ENCODE measurements at regions of chr3 and their contacts with region 1.

Region 1: GRCh38 chr3:42502429-42503250 is at the start of gene VIPR1:
- DNase-seq: peak; percentile 47
- H3K4me3 ChIP-seq: peak within 1 kb of the TSS; percentile 32 to 38 (median 35)
- H3K27ac ChIP-seq: no peak within 1 kb of the TSS
- H3K4me1 ChIP-seq: peaks cover 6% of the 10 kb centered on the region
- H3K27me3 ChIP-seq: peaks cover 6 to 10% of the 10 kb centered on the region in 2 experiments
- CTCF ChIP-seq: no peak
- POLR2A ChIP-seq: no peak
- total RNA-seq, gene VIPR1: 0.67 and 3.8 TPM in 2 replicates

Region 2: DNA sequence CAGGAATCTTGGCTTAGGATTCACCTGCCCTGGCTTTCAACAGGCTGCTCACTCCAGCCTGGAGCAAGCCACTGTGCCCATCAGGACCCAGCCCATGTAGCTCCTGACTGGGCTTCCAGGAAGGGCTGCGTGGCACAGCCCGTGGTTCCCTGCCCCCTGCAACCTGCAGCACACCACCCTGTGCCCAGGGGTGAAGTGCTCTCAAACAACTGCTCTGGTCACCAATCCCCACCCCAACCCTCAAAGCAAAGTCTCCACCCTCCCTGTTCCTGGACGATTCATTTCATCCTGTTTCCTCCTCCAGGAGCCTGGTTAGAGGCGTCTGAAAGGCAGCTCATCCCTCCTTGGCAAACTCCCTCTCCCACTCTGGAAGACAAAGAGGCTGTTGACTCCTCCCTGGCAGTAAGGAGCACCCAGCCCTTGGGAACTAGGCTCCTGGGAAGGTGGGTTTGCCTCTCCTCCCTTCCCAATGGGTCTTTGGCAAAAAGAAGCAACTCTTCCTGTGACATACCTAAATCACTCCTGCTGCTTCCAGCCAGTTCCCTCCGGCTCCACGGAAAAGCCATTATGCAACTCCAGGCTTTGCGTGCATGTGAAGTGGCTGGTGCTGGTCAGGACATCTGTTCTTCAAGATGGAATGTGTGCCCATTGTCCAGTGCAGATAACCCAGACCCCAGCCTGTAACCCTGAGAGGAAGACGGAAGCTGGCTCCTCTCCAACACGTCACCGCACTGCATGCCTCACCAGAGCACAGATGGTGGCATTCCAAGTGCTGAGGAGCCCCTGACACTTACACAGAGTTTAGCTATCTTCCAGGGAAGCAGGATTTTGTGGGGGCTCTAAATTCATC is 29.3 kb before region 1 on chr3:
- CTCF ChIA-PET with region 1: interaction called, 8 read pairs
- POLR2A ChIA-PET with region 1: interaction called, 9 read pairs
- dilution Hi-C with region 1: no loop called
- intact Hi-C with region 1: loop called (anchors 1 kb)
- DNase-seq: peak; percentile 92
- H3K4me3 ChIP-seq: peak overlapping the region in 1 of 3 experiments; percentile 2
- H3K27ac ChIP-seq: peak overlapping the region; percentile 89
- H3K4me1 ChIP-seq: peaks cover 32% of the 10 kb centered on the region
- H3K27me3 ChIP-seq: no peaks in the 10 kb centered on the region
- CTCF ChIP-seq: no peak
- POLR2A ChIP-seq: no peak

Region 3: GRCh38 chr3:42539869-42540714 is 37.5 kb after region 1 on chr3:
- CTCF ChIA-PET with region 1: interaction called, 19 read pairs
- POLR2A ChIA-PET with region 1: no interaction called
- dilution Hi-C with region 1: no loop called
- intact Hi-C with region 1: loop called (anchors 1 kb)
- DNase-seq: no peak
- H3K4me3 ChIP-seq: no peak overlapping the region
- H3K27ac ChIP-seq: no peak overlapping the region
- H3K4me1 ChIP-seq: no peaks in the 10 kb centered on the region
- H3K27me3 ChIP-seq: no peaks in the 10 kb centered on the region
- CTCF ChIP-seq: peak; percentile 62 to 78
- POLR2A ChIP-seq: no peak

Region 4: DNA sequence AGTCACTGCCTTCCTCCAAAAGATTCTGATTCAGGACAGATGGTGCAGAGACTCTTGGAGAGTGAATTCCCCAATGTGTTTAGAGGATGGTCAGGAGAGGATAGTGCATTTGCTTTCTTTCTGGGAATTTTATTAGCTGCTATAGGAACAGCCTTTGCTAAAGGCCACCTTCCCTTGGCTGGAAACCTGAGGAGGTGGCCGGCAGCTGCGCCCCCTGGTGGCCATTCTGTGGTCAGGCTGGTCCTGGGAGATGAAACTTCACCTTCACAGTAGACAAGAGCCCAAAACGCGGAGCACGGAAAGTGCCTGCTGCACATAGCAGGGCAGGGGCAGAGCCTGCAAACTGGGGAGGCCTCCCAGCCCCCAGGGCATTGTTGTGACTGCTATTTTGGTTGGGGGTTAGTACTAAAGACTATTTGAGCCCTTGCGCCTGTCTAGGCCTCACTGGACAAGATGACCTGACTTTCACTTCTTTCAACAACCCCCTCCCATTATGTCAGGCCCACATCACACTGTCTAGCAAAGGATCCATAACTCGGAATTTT is 44.8 kb after region 1 on chr3:
- CTCF ChIA-PET with region 1: interaction called, 31 read pairs
- POLR2A ChIA-PET with region 1: no interaction called
- dilution Hi-C with region 1: no loop called
- intact Hi-C with region 1: loop called (anchors 1 kb)
- DNase-seq: peak; percentile 57
- H3K4me3 ChIP-seq: no peak overlapping the region
- H3K27ac ChIP-seq: no peak overlapping the region
- H3K4me1 ChIP-seq: no peaks in the 10 kb centered on the region
- H3K27me3 ChIP-seq: no peaks in the 10 kb centered on the region
- CTCF ChIP-seq: peak; percentile 95 to 96
- POLR2A ChIP-seq: no peak